ENCODE measurements at regions of chr2 and their contacts with region 1.

Region 1: DNA sequence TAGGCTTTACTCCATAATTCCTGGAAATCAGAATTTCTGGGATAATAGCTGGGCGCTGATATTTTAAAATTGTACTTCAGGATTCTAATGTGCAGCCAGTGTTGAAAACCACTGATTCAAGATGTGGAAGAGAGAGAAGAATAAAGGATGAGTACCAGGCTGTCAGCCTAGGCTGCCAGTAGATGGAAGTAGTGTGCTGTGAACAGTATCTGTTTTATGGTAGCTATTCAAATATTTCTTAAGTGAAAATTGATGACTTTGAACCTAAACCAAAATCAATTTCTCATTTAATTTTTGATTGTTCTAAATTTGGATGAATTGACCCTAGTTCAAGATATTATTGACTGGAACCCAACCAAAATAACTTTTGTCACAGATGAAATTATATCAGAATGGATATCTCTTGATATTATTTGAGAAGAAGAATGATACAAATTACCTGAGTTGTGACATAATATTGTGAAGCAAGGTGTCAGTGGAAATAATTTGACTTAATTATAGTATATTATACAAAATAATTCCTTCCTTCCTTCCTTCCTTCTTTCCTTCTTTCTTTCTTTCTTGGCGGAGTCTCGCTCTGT is 88.1 kb downstream of the COMMD1 start:
- DNase-seq: peak; percentile 55
- ATAC-seq: peak; percentile 76
- H3K4me3 ChIP-seq: no peak overlapping the region
- H3K27ac ChIP-seq: no peak overlapping the region
- H3K4me1 ChIP-seq: peaks cover 26% of the 10 kb centered on the region
- H3K27me3 ChIP-seq: no peaks in the 10 kb centered on the region
- CTCF ChIP-seq: peak; percentile 74 to 87 (median 84)
- EP300 ChIP-seq: no peak
- POLR2A ChIP-seq: no peak
- RAD21 ChIP-seq: peak; percentile 91

Region 2: DNA sequence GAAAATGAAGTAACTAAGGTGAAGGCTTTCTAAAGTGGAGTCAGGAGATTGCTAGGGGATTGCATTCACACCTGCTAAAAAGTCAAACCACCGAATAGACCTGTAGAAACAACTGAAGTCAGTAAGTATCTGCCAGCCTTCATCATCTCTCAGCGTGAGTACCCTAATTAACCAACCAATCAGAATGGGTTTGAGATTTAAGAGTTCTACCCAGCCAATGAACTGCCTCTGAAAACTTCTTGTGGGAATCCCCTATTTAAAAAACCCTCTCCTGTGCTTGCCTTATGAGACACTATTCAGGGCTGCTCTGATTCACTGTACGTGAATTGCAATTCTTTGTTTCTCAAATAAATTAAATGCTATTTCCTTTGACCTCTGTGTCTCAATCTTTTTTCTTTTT is 136.3 kb before region 1 on chr2:
- CTCF ChIA-PET with region 1: no interaction called
- POLR2A ChIA-PET with region 1: no interaction called
- RAD21 ChIA-PET with region 1: no interaction called
- SMC1A ChIA-PET with region 1: no interaction called
- in situ Hi-C with region 1: no loop called
- intact Hi-C with region 1: no loop called
- DNase-seq: no peak
- ATAC-seq: no peak
- H3K4me3 ChIP-seq: no peak overlapping the region
- H3K27ac ChIP-seq: no peak overlapping the region
- H3K4me1 ChIP-seq: peaks cover 9% of the 10 kb centered on the region
- H3K27me3 ChIP-seq: no peaks in the 10 kb centered on the region
- CTCF ChIP-seq: no peak
- EP300 ChIP-seq: no peak
- POLR2A ChIP-seq: no peak
- RAD21 ChIP-seq: no peak

Region 3: GRCh38 chr2:62007555-62007954 is 14.0 kb after region 1 on chr2:
- CTCF ChIA-PET with region 1: interaction called, 40 read pairs
- POLR2A ChIA-PET with region 1: interaction called, 3 read pairs
- RAD21 ChIA-PET with region 1: interaction called, 16 read pairs
- SMC1A ChIA-PET with region 1: interaction called, 38 read pairs
- in situ Hi-C with region 1: no loop called
- intact Hi-C with region 1: no loop called
- DNase-seq: no peak
- ATAC-seq: no peak
- H3K4me3 ChIP-seq: no peak overlapping the region
- H3K27ac ChIP-seq: no peak overlapping the region
- H3K4me1 ChIP-seq: peaks cover 8% of the 10 kb centered on the region; the same call in 1 of the 2 replicates
- H3K27me3 ChIP-seq: no peaks in the 10 kb centered on the region
- CTCF ChIP-seq: no peak
- EP300 ChIP-seq: no peak
- POLR2A ChIP-seq: no peak
- RAD21 ChIP-seq: no peak

Region 4: GRCh38 chr2:62065243-62065642 is 71.7 kb after region 1 on chr2:
- CTCF ChIA-PET with region 1: interaction called, 8 read pairs
- POLR2A ChIA-PET with region 1: interaction called, 3 read pairs
- RAD21 ChIA-PET with region 1: interaction called, 26 read pairs
- SMC1A ChIA-PET with region 1: interaction called, 19 read pairs
- in situ Hi-C with region 1: no loop called
- intact Hi-C with region 1: loop called (anchors 2 kb)
- DNase-seq: no peak
- ATAC-seq: peak; percentile 56
- H3K4me3 ChIP-seq: peak overlapping the region; percentile 11; the same call in 1 of the 2 replicates
- H3K27ac ChIP-seq: peak overlapping the region; percentile 81
- H3K4me1 ChIP-seq: peaks cover 37% of the 10 kb centered on the region
- H3K27me3 ChIP-seq: no peaks in the 10 kb centered on the region
- CTCF ChIP-seq: no peak
- EP300 ChIP-seq: no peak
- POLR2A ChIP-seq: no peak
- RAD21 ChIP-seq: no peak

Region 5: DNA sequence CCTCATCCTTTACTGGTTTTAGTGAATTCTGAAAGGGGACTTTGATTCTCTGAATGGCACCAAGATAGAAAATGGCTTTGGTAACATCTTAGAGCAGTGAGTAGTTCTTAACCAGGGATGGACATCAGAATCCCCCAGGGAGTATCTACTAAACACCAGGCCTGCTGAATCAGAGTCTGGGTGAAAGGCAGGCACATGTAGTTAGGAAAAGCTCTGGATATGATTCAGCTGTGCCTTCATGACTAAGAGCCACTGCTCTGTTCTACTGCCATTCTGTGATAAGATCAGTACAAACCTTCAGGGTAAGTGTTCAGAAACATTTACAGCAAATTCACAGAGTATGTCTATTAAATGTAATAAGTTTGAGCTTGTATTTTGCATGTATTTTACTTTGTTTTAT is 156.2 kb after region 1 on chr2:
- CTCF ChIA-PET with region 1: interaction called, 21 read pairs
- POLR2A ChIA-PET with region 1: interaction called, 3 read pairs
- RAD21 ChIA-PET with region 1: interaction called, 83 read pairs
- SMC1A ChIA-PET with region 1: interaction called, 47 read pairs
- in situ Hi-C with region 1: no loop called
- intact Hi-C with region 1: no loop called
- DNase-seq: no peak
- ATAC-seq: peak; percentile 23
- H3K4me3 ChIP-seq: no peak overlapping the region; the same call in 1 of the 2 replicates
- H3K27ac ChIP-seq: peak overlapping the region; percentile 91
- H3K4me1 ChIP-seq: peaks cover 43% of the 10 kb centered on the region
- H3K27me3 ChIP-seq: no peaks in the 10 kb centered on the region
- CTCF ChIP-seq: no peak
- EP300 ChIP-seq: no peak
- POLR2A ChIP-seq: no peak
- RAD21 ChIP-seq: no peak

Region 6: GRCh38 chr2:62227386-62228075 is 234.0 kb after region 1 on chr2:
- CTCF ChIA-PET with region 1: interaction called, 4 read pairs
- POLR2A ChIA-PET with region 1: interaction called, 3 read pairs
- RAD21 ChIA-PET with region 1: no interaction called
- SMC1A ChIA-PET with region 1: interaction called, 3 read pairs
- in situ Hi-C with region 1: no loop called
- intact Hi-C with region 1: loop called (anchors 5 kb)
- DNase-seq: no peak
- ATAC-seq: peak; percentile 6; the same call in 2 of the 3 replicates
- H3K4me3 ChIP-seq: no peak overlapping the region
- H3K27ac ChIP-seq: no peak overlapping the region
- H3K4me1 ChIP-seq: no peaks in the 10 kb centered on the region
- H3K27me3 ChIP-seq: no peaks in the 10 kb centered on the region
- CTCF ChIP-seq: no peak
- EP300 ChIP-seq: no peak
- POLR2A ChIP-seq: peak; percentile 69
- RAD21 ChIP-seq: no peak

Region 7: GRCh38 chr2:62415019-62415431 is 421.5 kb after region 1 on chr2:
- CTCF ChIA-PET with region 1: interaction called, 195 read pairs
- POLR2A ChIA-PET with region 1: interaction called, 11 read pairs
- RAD21 ChIA-PET with region 1: interaction called, 141 read pairs
- SMC1A ChIA-PET with region 1: interaction called, 189 read pairs
- in situ Hi-C with region 1: loop called (anchors 5 kb)
- intact Hi-C with region 1: loop called (anchors 1 kb)
- DNase-seq: peak; percentile 78
- ATAC-seq: peak; percentile 85
- H3K4me3 ChIP-seq: peak overlapping the region; percentile 37; the same call in 1 of the 2 replicates
- H3K27ac ChIP-seq: peak overlapping the region; percentile 70
- H3K4me1 ChIP-seq: peaks cover 39% of the 10 kb centered on the region
- H3K27me3 ChIP-seq: no peaks in the 10 kb centered on the region
- CTCF ChIP-seq: no peak
- EP300 ChIP-seq: peak in 1 of 2 experiments; percentile 35; a peak in 1 of 4 replicates
- POLR2A ChIP-seq: no peak
- RAD21 ChIP-seq: peak; percentile 3; the same call in 1 of the 2 replicates